Activated CD8-positive, alpha-beta T cell treated with anti-CD3 and anti-CD28 coated beads for 36 hours (primary cell): ENCODE measurements at regions of chr15 and their contacts with region 1.

Region 1: GRCh38 chr15:31435261-31435911 is 108.8 kb downstream of the KLF13 start:
- DNase-seq: peak; percentile 95
- ATAC-seq: peak; percentile 71
- H3K4me3 Mint-ChIP-seq: peak overlapping the region; percentile 72
- H3K27ac Mint-ChIP-seq: peak overlapping the region; percentile 98
- H3K4me1 Mint-ChIP-seq: peaks cover 72% of the 10 kb centered on the region
- H3K27me3 Mint-ChIP-seq: no peaks in the 10 kb centered on the region
- CTCF ChIP-seq: peak; percentile 63

Region 2: GRCh38 chr15:31215490-31216214 is 219.7 kb before region 1 on chr15:
- CTCF ChIA-PET with region 1: interaction called, 23 read pairs
- POLR2A ChIA-PET with region 1: interaction called, 3 read pairs
- intact Hi-C with region 1: no loop called
- DNase-seq: peak; percentile 86
- ATAC-seq: peak; percentile 92
- H3K4me3 Mint-ChIP-seq: peak overlapping the region; percentile 73
- H3K27ac Mint-ChIP-seq: peak overlapping the region; percentile 73
- H3K4me1 Mint-ChIP-seq: peaks cover 18% of the 10 kb centered on the region
- H3K27me3 Mint-ChIP-seq: no peaks in the 10 kb centered on the region
- CTCF ChIP-seq: peak; percentile 86

Region 3: DNA sequence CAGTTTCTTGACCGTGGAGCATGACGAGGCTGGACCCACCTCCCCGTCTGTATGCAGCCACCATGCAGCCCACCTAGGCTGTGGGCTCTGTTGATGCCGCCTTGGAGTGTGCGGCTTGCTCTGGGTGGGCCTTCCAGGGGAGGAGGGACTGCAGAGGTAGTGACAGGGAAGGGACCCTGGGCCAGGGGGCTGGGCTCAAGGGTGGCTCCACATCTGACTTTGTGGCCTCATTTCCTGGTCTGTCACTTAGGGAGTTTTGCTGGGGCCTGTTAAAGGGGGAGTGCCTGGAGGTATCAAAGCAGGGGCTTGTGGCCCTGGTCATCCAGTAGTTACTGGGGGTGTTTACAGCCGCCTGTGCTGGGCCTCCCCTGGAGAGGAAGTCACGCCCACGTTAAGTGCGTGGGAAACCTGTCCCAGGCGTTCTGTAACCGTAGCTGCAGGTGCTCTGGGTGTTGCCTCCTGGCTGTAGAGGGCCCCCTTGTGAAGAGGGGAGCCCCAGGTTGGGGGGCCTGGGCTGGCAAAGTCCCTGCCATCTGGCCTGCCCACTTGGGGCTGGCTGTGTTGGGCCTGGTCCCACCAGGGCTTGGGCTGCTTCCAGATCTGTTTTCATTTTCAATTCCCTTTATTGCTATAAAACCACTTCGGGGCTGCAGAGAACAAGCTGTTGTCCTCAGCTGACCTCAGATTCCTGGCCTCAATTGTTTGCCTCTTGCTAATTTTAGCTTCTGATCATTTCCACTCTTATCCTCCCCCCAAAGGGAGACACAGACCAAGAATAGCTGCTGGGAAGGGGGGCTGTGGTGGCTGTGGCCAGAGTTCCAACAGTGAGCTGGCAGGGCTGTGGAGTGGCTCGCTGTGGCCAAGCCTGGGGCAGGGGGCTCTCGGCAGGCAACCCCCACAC is 82.2 kb before region 1 on chr15:
- CTCF ChIA-PET with region 1: interaction called, 17 read pairs
- POLR2A ChIA-PET with region 1: interaction called, 78 read pairs
- intact Hi-C with region 1: no loop called
- DNase-seq: peak; percentile 84
- ATAC-seq: peak; percentile 62
- H3K4me3 Mint-ChIP-seq: peak overlapping the region; percentile 59
- H3K27ac Mint-ChIP-seq: peak overlapping the region; percentile 99
- H3K4me1 Mint-ChIP-seq: peaks cover 96% of the 10 kb centered on the region
- H3K27me3 Mint-ChIP-seq: no peaks in the 10 kb centered on the region
- CTCF ChIP-seq: no peak

Region 4: GRCh38 chr15:31379042-31379441 is 56.3 kb before region 1 on chr15:
- CTCF ChIA-PET with region 1: interaction called, 13 read pairs
- POLR2A ChIA-PET with region 1: interaction called, 12 read pairs
- intact Hi-C with region 1: no loop called
- DNase-seq: peak; percentile 61
- ATAC-seq: peak; percentile 58
- H3K4me3 Mint-ChIP-seq: no peak overlapping the region
- H3K27ac Mint-ChIP-seq: peak overlapping the region; percentile 82
- H3K4me1 Mint-ChIP-seq: peaks cover 60% of the 10 kb centered on the region
- H3K27me3 Mint-ChIP-seq: no peaks in the 10 kb centered on the region
- CTCF ChIP-seq: no peak

Region 5: GRCh38 chr15:31402511-31403056 is 32.8 kb before region 1 on chr15:
- CTCF ChIA-PET with region 1: interaction called, 9 read pairs
- POLR2A ChIA-PET with region 1: interaction called, 36 read pairs
- intact Hi-C with region 1: no loop called
- DNase-seq: no peak
- ATAC-seq: no peak
- H3K4me3 Mint-ChIP-seq: no peak overlapping the region
- H3K27ac Mint-ChIP-seq: no peak overlapping the region
- H3K4me1 Mint-ChIP-seq: peaks cover 61% of the 10 kb centered on the region
- H3K27me3 Mint-ChIP-seq: no peaks in the 10 kb centered on the region
- CTCF ChIP-seq: no peak

Region 6: GRCh38 chr15:31472636-31473384 is 37.4 kb after region 1 on chr15:
- CTCF ChIA-PET with region 1: interaction called, 85 read pairs
- POLR2A ChIA-PET with region 1: interaction called, 35 read pairs
- intact Hi-C with region 1: loop called (anchors 2 kb)
- DNase-seq: peak; percentile 76
- ATAC-seq: peak; percentile 87
- H3K4me3 Mint-ChIP-seq: peak overlapping the region; percentile 65
- H3K27ac Mint-ChIP-seq: peak overlapping the region; percentile 90
- H3K4me1 Mint-ChIP-seq: peaks cover 63% of the 10 kb centered on the region
- H3K27me3 Mint-ChIP-seq: no peaks in the 10 kb centered on the region
- CTCF ChIP-seq: no peak

Region 7: GRCh38 chr15:31526916-31527690 is 91.7 kb after region 1 on chr15:
- CTCF ChIA-PET with region 1: no interaction called
- POLR2A ChIA-PET with region 1: no interaction called
- intact Hi-C with region 1: no loop called
- DNase-seq: no peak
- ATAC-seq: no peak
- H3K4me3 Mint-ChIP-seq: no peak overlapping the region
- H3K27ac Mint-ChIP-seq: no peak overlapping the region
- H3K4me1 Mint-ChIP-seq: no peaks in the 10 kb centered on the region
- H3K27me3 Mint-ChIP-seq: no peaks in the 10 kb centered on the region
- CTCF ChIP-seq: no peak